ENCODE measurements at regions of chr18 and their contacts with region 1.

Region 1: DNA sequence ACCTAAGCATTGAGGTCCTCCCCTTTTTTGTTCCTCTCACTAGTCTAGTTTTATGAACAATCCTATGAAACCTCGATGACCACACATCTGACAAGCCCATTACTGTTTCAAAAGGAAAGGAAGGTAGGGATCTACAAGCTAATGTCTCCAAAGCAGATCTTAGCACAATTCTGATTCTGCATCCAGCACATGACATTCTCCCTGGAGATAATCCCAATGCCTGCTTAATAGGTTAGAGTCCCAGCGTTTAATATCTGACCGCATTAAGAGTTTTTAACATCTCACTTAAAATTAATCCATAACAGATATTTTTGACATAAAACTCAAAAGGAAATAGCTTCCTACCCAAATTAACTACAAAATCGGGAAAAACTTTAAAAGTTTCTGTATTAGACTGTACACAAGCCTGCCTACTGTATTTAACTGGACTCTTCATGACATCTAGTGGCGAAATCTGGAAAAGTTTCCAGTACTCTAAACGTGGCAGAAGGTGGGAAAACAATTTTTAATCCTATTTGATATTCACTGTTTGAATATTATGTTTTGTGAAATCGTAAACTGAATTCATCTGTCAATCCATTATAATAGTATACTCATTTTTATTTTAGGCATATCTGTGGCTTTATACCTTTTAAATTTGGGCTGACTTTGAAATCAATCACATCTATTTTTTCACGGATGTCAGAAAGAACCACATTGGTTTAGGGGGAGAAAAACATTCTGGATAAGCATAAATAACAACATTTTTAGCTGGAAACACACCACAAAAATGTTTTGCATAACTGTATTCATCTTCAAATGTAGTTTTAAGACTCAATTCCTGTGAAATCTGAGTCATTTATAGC is 62.4 kb downstream of the TXNL1 start:
- DNase-seq: peak; percentile 43
- ATAC-seq: peak; percentile 88
- H3K4me3 ChIP-seq: no peak overlapping the region
- H3K27ac ChIP-seq: no peak overlapping the region
- H3K4me1 ChIP-seq: no peaks in the 10 kb centered on the region
- H3K27me3 ChIP-seq: no peaks in the 10 kb centered on the region; the same call in 1 of the 2 replicates
- CTCF ChIP-seq: peak; percentile 44 to 73 (median 47); a peak in 5 of 6 replicates
- POLR2A ChIP-seq: no peak
- RAD21 ChIP-seq: peak; percentile 73

Region 2: DNA sequence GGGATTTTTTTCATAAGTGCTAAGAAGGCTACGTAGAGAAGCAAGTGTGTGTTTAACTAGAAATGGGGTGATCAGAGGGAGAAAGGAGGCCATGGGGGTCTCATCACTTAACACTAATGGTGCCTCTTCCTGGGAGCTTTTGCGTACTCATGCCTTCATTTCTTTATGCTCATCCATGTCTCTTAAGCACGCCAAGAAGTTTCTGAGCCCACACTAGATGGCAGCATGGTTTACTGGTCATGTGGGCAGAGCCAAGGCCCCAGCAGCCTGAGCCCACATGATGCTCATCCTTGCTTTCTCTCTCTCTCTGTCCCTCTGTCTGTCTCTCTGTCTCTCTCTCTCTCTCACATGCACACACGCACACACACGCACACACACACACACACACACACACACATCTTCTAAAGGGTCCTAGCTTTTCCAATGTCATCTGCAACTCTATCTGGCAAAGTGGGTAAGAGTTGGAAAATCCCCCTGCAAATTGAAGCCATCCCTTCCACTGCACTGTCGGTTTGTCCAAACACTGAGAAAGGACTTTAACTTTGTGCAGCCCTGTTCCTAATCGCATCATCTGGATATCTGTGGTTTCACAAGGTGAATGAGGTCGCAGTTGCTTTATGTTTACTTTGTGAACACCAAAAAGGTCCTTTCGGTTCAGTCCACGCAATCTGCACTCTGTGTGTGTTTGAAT is 1479.6 kb before region 1 on chr18:
- CTCF ChIA-PET with region 1: no interaction called
- POLR2A ChIA-PET with region 1: no interaction called
- RAD21 ChIA-PET with region 1: no interaction called
- intact Hi-C with region 1: loop called (anchors 5 kb)
- DNase-seq: peak; percentile 32
- ATAC-seq: peak; percentile 87
- H3K4me3 ChIP-seq: no peak overlapping the region
- H3K27ac ChIP-seq: no peak overlapping the region
- H3K4me1 ChIP-seq: peaks cover 4 to 12% of the 10 kb centered on the region in 2 experiments
- H3K27me3 ChIP-seq: peaks cover 6% of the 10 kb centered on the region; the same call in 1 of the 2 replicates
- CTCF ChIP-seq: peak; percentile 8 to 45 (median 41); a peak in 4 of 6 replicates
- POLR2A ChIP-seq: no peak
- RAD21 ChIP-seq: peak; percentile 52

Region 3: DNA sequence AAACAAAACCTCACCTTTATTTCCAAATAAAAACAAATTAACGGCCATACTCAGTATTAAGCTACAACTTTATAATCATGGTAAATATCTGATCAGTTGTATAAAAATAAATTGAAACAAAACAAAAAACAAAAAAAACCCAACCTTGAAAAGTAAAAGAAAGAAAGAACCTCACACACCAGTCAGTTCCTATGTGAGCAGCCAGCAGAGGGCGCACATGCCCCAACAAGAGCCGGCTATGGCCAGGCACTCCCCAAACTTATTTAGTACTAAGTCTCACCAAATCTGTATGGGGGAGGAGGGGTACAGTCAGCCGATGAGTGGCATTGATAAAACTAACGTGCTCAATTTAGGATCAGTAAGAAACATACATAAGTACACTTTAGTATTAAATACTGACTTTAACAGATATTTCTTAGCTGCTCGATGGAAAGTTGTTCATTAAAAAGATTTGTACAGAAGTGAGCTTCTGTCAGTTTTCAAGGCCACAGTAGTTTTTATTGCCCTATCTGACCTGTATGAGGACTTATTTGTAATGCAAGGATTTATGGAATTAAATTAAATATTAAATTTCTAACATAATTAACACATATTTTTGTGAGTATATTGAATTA is 1160.7 kb before region 1 on chr18:
- CTCF ChIA-PET with region 1: no interaction called
- POLR2A ChIA-PET with region 1: no interaction called
- RAD21 ChIA-PET with region 1: no interaction called
- intact Hi-C with region 1: loop called (anchors 1 kb)
- DNase-seq: peak; percentile 37
- ATAC-seq: peak; percentile 84
- H3K4me3 ChIP-seq: no peak overlapping the region
- H3K27ac ChIP-seq: no peak overlapping the region
- H3K4me1 ChIP-seq: no peaks in the 10 kb centered on the region
- H3K27me3 ChIP-seq: no peaks in the 10 kb centered on the region
- CTCF ChIP-seq: peak; percentile 31 to 91 (median 72); a peak in 5 of 6 replicates
- POLR2A ChIP-seq: no peak
- RAD21 ChIP-seq: peak; percentile 60